Caco-2 (cell line): ENCODE measurements at regions of chr2 and their contacts with region 1.

Region 1: GRCh38 chr2:149597668-149598326 is 10.2 kb upstream of the MMADHC start:
- DNase-seq: peak; percentile 55 to 68
- H3K4me3 ChIP-seq: no peak overlapping the region
- H3K4me3 Mint-ChIP-seq: no peak overlapping the region
- H3K27ac Mint-ChIP-seq: no peak overlapping the region
- H3K4me1 ChIP-seq: peaks cover 24% of the 10 kb centered on the region
- H3K4me1 Mint-ChIP-seq: peaks cover 26% of the 10 kb centered on the region
- H3K27me3 ChIP-seq: no peaks in the 10 kb centered on the region
- H3K27me3 Mint-ChIP-seq: no peaks in the 10 kb centered on the region
- CTCF ChIP-seq: peak; percentile 77 to 83

Region 2: GRCh38 chr2:149703281-149703680 is 105.5 kb after region 1 on chr2:
- CTCF ChIA-PET with region 1: no interaction called
- POLR2A ChIA-PET with region 1: no interaction called
- intact Hi-C with region 1: no loop called
- DNase-seq: no peak
- H3K4me3 ChIP-seq: no peak overlapping the region
- H3K4me3 Mint-ChIP-seq: no peak overlapping the region
- H3K27ac Mint-ChIP-seq: no peak overlapping the region
- H3K4me1 ChIP-seq: no peaks in the 10 kb centered on the region
- H3K4me1 Mint-ChIP-seq: no peaks in the 10 kb centered on the region
- H3K27me3 ChIP-seq: no peaks in the 10 kb centered on the region
- H3K27me3 Mint-ChIP-seq: no peaks in the 10 kb centered on the region
- CTCF ChIP-seq: no peak

Region 3: GRCh38 chr2:149765635-149766034 is 167.8 kb after region 1 on chr2:
- CTCF ChIA-PET with region 1: no interaction called
- POLR2A ChIA-PET with region 1: no interaction called
- intact Hi-C with region 1: loop called (anchors 2 kb)
- DNase-seq: no peak
- H3K4me3 ChIP-seq: no peak overlapping the region
- H3K4me3 Mint-ChIP-seq: no peak overlapping the region
- H3K27ac Mint-ChIP-seq: no peak overlapping the region
- H3K4me1 ChIP-seq: no peaks in the 10 kb centered on the region
- H3K4me1 Mint-ChIP-seq: no peaks in the 10 kb centered on the region
- H3K27me3 ChIP-seq: no peaks in the 10 kb centered on the region
- H3K27me3 Mint-ChIP-seq: no peaks in the 10 kb centered on the region
- CTCF ChIP-seq: no peak

Region 4: GRCh38 chr2:150143087-150143536 is 545.3 kb after region 1 on chr2:
- CTCF ChIA-PET with region 1: no interaction called
- POLR2A ChIA-PET with region 1: no interaction called
- intact Hi-C with region 1: no loop called
- DNase-seq: no peak
- H3K4me3 ChIP-seq: no peak overlapping the region
- H3K4me3 Mint-ChIP-seq: no peak overlapping the region
- H3K27ac Mint-ChIP-seq: no peak overlapping the region
- H3K4me1 ChIP-seq: no peaks in the 10 kb centered on the region
- H3K4me1 Mint-ChIP-seq: peaks cover 7% of the 10 kb centered on the region
- H3K27me3 ChIP-seq: no peaks in the 10 kb centered on the region
- H3K27me3 Mint-ChIP-seq: no peaks in the 10 kb centered on the region
- CTCF ChIP-seq: no peak

Region 5: DNA sequence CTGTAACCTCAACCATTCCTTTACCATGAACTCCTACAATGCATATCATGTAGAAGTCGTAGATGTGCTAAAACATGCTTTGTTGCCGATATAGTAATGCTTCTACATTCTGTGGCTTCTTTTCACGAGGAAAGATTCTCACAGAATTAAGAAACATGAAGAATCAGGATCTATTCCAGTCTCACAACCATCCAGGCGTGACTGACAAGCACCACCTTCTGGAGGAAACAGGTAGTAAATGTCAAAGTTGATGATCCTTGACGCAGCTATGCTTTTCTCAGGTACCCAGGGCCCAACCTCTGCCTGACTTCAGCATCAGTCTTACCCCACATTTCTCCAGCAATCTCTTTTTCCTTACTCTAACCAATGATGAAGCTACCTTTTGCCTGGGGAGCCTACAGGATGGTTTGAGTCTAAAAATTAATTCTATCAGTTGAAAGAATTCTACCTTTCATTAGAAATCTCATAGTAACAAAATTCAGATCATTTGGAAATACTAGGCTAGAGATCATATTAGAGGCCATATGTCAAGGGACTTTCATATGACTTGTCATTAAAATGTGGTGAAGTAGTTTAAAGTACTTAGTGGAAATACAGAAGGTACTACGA is 1013.0 kb after region 1 on chr2:
- CTCF ChIA-PET with region 1: no interaction called
- POLR2A ChIA-PET with region 1: no interaction called
- intact Hi-C with region 1: loop called (anchors 1 kb)
- DNase-seq: peak; percentile 59 to 77
- H3K4me3 ChIP-seq: no peak overlapping the region
- H3K4me3 Mint-ChIP-seq: no peak overlapping the region
- H3K27ac Mint-ChIP-seq: no peak overlapping the region
- H3K4me1 ChIP-seq: peaks cover 16% of the 10 kb centered on the region
- H3K4me1 Mint-ChIP-seq: peaks cover 13% of the 10 kb centered on the region
- H3K27me3 ChIP-seq: no peaks in the 10 kb centered on the region
- H3K27me3 Mint-ChIP-seq: no peaks in the 10 kb centered on the region
- CTCF ChIP-seq: peak; percentile 76 to 85

Region 6: GRCh38 chr2:151051574-151052220 is 1453.9 kb after region 1 on chr2:
- CTCF ChIA-PET with region 1: no interaction called
- POLR2A ChIA-PET with region 1: no interaction called
- intact Hi-C with region 1: loop called (anchors 2 kb)
- DNase-seq: peak; percentile 45
- H3K4me3 ChIP-seq: no peak overlapping the region
- H3K4me3 Mint-ChIP-seq: no peak overlapping the region
- H3K27ac Mint-ChIP-seq: no peak overlapping the region
- H3K4me1 ChIP-seq: peaks cover 10% of the 10 kb centered on the region
- H3K4me1 Mint-ChIP-seq: no peaks in the 10 kb centered on the region
- H3K27me3 ChIP-seq: peaks cover 1% of the 10 kb centered on the region; the same call in 1 of the 2 replicates
- H3K27me3 Mint-ChIP-seq: peaks cover 5% of the 10 kb centered on the region
- CTCF ChIP-seq: peak; percentile 58 to 79